AG04449 (cell line): ENCODE measurements at regions of chr19 and their contacts with region 1.

Region 1: GRCh38 chr19:42450314-42450934 is 7.7 kb upstream of the CXCL17 start:
- DNase-seq: peak; percentile 19
- H3K4me3 ChIP-seq: no peak overlapping the region
- CTCF ChIP-seq: peak; percentile 78

Region 2: GRCh38 chr19:42412227-42412626 is 38.2 kb before region 1 on chr19:
- CTCF ChIA-PET with region 1: no interaction called
- POLR2A ChIA-PET with region 1: no interaction called
- DNase-seq: no peak
- H3K4me3 ChIP-seq: no peak overlapping the region
- CTCF ChIP-seq: no peak

Region 3: DNA sequence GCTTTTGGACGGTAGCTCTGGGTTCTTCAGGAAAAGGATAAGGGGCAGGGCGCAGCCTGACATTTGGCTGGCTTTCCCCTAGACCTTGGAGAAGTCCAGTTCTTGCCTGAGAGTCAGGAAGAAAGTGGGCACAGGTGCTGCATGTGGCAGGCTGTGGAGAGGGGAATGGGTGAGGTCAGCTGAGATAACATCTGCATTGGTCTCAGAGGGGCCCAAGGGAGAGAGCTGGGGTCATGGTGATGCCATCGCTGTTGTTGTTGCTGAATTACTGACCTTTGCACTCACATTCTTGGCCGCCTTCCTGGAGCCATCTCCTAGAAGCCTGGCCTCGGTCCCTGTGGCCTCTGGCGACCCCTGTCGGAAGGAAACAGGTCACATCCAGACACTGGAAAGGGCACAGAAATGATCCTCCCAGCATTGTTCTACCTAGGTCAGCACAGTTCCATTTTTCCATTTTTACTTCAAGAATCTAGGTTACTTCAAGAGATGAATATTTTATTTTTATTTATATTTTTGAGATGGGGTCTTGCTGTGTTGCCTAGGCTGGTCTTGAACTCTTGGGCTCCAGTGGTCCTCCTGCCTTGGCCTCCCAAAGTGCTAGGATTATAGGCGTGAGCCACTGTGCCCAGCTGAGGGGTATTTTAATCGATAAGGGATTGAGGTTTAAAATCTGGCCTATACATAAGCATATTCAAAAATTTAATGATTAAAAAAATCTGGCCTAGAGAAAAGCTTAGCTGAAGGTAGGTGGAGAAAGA is 16.7 kb before region 1 on chr19:
- CTCF ChIA-PET with region 1: interaction called, 22 read pairs
- POLR2A ChIA-PET with region 1: no interaction called
- DNase-seq: no peak
- H3K4me3 ChIP-seq: no peak overlapping the region
- CTCF ChIP-seq: peak; percentile 53

Region 4: GRCh38 chr19:42465827-42466280 is 15.4 kb after region 1 on chr19:
- CTCF ChIA-PET with region 1: interaction called, 22 read pairs
- POLR2A ChIA-PET with region 1: no interaction called
- DNase-seq: no peak
- H3K4me3 ChIP-seq: no peak overlapping the region
- CTCF ChIP-seq: no peak

Region 5: DNA sequence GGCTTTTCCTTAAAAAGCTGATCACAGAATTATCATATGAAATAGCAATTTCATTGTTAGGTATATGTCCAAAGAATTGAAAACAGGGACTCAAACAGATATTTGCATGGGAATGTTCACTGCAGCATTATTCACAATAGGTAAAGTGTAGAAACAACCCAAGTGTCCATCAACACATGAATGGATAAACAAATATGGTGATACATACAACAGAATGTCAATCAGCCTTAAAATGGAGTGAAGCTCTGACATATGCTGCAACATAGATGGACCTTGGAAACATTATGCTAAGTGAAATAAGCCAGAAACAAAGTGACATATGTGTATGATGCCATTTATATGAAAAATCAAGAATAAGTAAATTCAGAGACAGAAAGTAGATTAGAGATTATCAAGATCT is 84.0 kb after region 1 on chr19:
- CTCF ChIA-PET with region 1: interaction called, 170 read pairs
- POLR2A ChIA-PET with region 1: no interaction called
- DNase-seq: no peak
- H3K4me3 ChIP-seq: no peak overlapping the region
- CTCF ChIP-seq: no peak

Region 6: DNA sequence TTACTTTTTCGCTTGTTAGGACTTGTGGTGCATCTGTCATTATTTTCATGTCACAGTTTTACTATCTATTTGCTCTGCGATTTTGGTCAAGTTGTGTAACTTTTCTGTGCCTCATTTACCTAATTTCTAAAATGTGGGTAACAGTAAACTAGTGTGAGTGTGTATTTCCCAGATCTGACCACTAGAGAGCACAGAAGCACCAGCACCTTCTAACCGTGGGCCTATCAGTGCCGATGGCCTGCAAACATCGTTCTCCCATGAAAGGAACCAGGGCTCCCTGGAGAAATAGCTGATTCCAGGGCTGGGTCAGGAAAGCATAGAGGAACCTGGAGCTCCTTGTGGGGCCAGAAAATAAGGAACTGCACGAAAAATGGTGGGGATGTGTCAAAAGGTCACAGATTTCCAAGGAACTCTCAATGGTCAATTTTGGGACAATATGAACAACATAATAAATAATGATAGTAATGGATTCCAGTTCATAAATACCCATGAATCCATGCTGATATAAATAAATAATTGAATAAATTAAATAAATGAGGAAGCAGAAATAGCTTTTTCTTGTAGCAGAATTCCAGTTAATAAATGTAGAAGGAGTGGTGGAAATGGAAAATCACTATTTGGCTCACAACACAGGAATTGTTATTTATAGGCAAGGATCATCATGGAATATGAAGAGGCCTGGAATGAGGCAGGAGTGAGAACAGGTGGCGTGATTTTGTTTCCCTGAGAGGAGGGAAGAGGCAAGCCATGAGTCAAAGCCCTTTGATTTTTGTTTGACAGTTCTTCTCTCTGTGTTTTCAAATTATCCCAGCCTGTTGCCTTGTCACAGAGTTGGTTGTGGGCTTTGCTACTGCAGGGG is 113.2 kb after region 1 on chr19:
- CTCF ChIA-PET with region 1: interaction called, 10 read pairs
- POLR2A ChIA-PET with region 1: no interaction called
- DNase-seq: no peak
- H3K4me3 ChIP-seq: no peak overlapping the region
- CTCF ChIP-seq: peak; percentile 69